AG04450 (cell line): ENCODE measurements at regions of chr17 and their contacts with region 1.

Region 1: DNA sequence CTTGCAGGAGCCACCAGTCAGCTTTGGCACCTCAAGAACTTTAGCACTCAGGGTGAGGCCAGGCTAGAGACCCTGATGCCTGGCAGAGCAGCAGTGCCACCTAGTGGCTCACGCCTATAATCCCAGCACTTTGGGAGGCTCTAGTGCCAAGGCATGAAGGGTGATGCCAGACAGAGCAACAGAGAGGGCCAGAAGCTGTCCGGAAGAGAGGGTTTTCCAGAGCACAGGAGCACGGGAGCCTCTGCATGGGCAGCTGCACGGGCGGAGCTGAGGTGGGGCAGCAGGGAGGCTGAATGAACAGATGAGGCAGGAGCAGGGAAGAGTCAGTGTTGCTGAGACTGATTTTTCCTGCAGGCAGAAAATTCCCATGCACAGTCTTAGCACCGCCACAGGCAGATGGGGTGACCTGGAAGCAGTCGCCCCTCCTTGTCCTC is 38.9 kb downstream of the MYH3 start:
- DNase-seq: peak; percentile 18
- H3K4me3 ChIP-seq: no peak overlapping the region
- H3K27ac ChIP-seq: no peak overlapping the region
- H3K27me3 ChIP-seq: no peaks in the 10 kb centered on the region
- CTCF ChIP-seq: peak; percentile 93

Region 2: DNA sequence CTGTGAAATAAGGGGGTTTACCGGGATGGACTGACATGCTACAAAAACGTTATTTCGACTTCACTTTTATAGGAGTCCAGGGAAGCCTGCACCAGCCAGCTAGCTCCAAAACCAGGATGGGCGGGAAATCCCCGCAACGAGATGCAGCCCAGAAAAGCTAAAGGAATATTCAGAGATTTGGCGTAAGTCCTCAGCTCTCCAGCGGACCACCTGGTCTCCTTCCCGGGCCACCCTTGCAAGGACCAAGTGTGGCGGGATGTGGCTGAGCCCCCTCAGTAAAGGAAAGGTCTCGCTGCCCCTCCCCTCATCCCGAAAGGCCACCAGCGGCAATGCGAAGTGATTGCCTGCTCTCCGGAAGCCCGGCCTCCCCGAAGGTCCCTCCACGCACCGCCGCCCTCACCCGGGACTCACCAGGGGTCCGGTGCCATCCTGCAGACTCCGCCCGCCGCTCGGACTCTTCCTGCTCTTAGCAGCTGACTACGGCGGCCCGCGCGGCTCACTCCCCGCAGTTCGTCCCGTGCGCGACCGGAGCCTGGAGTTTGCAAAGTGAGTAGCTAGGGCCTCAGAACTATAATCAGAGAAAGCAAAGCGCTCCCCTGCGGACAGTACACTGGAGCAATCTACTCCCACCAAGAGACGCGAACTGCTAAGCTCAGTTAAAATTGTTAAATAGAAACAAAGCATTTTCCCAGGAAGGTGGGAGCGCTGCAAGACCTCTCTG is 1042.7 kb before region 1 on chr17 and contains the start of gene STX8:
- CTCF ChIA-PET with region 1: interaction called, 41 read pairs
- POLR2A ChIA-PET with region 1: no interaction called
- DNase-seq: peak; percentile 75
- H3K4me3 ChIP-seq: peak within 1 kb of the TSS; percentile 87
- H3K27ac ChIP-seq: peak within 1 kb of the TSS; percentile 39
- H3K27me3 ChIP-seq: no peaks in the 10 kb centered on the region
- CTCF ChIP-seq: peak; percentile 19; the same call in 1 of the 2 replicates
- polyA plus RNA-seq, gene STX8: 89.6 and 103 TPM in 2 replicates

Region 3: DNA sequence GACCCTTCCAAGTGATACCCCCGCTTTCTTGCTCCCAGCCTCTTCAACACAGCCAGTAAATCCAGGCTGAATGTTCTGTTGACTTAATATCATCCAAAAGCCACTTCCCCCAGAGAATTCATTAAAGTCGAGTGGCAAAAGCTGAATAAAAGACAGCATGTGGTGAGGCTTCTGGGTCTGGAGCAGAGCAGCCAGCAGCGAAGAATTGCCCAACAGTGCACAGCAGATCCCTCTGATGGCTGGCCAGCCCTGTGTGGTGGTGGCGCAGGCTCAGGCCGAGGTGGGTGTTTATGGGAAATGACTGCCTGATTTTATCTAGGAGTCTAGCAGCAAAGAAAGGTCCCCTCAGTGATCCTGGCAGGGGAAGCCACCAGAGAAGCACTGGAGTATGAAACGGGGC is 682.8 kb before region 1 on chr17:
- CTCF ChIA-PET with region 1: interaction called, 205 read pairs
- POLR2A ChIA-PET with region 1: no interaction called
- DNase-seq: no peak
- H3K4me3 ChIP-seq: no peak overlapping the region
- H3K27ac ChIP-seq: no peak overlapping the region
- H3K27me3 ChIP-seq: no peaks in the 10 kb centered on the region
- CTCF ChIP-seq: no peak

Region 4: GRCh38 chr17:10033959-10034358 is 584.3 kb before region 1 on chr17:
- CTCF ChIA-PET with region 1: no interaction called
- POLR2A ChIA-PET with region 1: no interaction called
- DNase-seq: no peak
- H3K4me3 ChIP-seq: no peak overlapping the region
- H3K27ac ChIP-seq: no peak overlapping the region
- H3K27me3 ChIP-seq: no peaks in the 10 kb centered on the region
- CTCF ChIP-seq: no peak

Region 5: GRCh38 chr17:10327640-10328039 is 290.6 kb before region 1 on chr17:
- CTCF ChIA-PET with region 1: interaction called, 30 read pairs
- POLR2A ChIA-PET with region 1: no interaction called
- DNase-seq: no peak
- H3K4me3 ChIP-seq: no peak overlapping the region
- H3K27ac ChIP-seq: no peak overlapping the region
- H3K27me3 ChIP-seq: no peaks in the 10 kb centered on the region
- CTCF ChIP-seq: peak; percentile 72

Region 6: DNA sequence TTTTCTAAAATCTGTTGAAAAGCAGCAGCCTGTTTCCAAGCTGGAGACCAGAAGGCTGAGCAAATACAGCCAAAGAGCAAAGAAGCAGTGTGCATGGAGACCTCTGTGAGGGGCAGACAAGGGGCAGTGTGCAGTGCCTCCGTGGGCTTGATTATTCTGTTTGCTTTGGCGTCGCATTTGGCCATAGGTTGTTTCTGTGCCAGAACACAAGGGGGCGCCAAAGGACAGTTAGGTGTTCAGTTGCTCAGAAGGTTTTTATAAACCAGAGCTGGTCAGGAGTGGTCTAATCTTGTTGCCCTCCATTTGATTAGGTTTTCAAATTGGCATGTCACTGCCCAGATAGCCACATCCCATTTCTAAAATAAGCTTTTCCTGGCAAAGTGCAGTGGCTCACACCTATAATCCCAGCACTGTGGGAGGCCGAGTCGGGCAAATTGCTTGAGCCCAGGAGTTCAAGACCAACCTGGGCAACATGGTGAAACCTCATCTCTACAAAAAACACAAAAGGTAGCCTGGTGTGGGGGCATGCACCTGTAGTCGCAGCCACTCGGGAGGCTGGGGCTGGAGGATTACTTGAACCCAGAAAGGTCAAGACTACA is 28.3 kb after region 1 on chr17:
- CTCF ChIA-PET with region 1: interaction called, 296 read pairs
- POLR2A ChIA-PET with region 1: no interaction called
- DNase-seq: peak; percentile 49
- H3K4me3 ChIP-seq: no peak overlapping the region
- H3K27ac ChIP-seq: no peak overlapping the region
- H3K27me3 ChIP-seq: no peaks in the 10 kb centered on the region
- CTCF ChIP-seq: peak; percentile 94

Region 7: DNA sequence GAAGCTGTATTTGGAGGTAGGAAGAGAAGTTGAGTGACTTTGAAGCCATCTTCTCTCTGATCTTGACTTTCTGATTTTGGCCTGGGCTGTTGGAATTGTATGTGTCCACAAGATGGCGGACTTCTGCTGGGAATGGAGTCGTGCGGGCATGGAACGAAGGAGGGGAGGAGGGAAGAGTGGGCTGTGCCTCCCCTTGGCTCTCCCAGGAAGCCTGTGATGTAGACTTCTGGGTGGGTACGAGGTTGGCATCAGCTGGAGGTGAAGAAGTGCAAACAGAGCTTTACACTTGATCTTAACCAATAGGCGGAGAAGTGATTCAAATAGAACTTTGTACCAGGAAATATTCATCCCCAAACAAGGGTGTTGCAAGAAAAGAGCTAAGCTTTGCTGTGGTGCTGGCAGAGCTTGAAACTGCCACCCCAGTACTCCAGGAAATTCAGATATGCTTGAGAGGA is 119.0 kb after region 1 on chr17:
- CTCF ChIA-PET with region 1: interaction called, 12 read pairs
- POLR2A ChIA-PET with region 1: no interaction called
- DNase-seq: peak; percentile 24
- H3K4me3 ChIP-seq: no peak overlapping the region
- H3K27ac ChIP-seq: no peak overlapping the region
- H3K27me3 ChIP-seq: peaks cover 14% of the 10 kb centered on the region
- CTCF ChIP-seq: peak; percentile 82